ENCODE measurements at regions of chr2 and their contacts with region 1.

Region 1: DNA sequence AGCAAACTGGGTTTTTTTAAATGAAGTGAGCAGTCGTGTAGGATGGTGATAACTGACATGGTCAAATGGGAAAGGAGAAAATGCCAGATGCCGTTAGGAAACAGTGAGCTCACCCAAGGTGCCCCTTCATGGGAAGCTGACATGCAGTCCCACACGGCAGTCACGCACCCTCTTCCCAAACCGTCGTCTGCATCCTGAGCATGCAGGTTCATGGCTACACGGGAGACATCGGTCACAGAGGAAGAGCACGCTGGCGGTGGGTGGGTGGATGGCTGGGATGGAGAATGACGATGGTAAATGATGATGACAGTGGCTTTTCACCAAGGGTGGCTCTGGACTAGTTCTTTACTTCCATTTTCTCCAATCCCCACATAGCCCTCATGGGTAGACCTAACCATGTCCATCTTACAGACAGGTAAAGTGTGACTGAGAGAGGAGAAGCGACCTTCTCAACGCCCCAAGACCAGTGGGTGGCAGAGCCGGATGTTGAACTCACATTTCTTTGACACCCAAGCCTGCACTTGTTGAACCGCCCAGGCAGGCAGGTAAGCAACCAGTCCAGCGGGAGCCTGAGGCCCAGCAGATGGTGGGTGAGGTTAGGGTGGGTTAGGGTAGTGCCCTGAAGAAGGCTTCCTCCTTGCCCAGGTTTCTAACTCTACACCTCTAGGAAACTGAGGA is 44.5 kb downstream of the TNS1 start:
- DNase-seq: peak; percentile 42

Region 2: GRCh38 chr2:217932799-217933616 is 25.3 kb before region 1 on chr2:
- intact Hi-C with region 1: loop called in 1 of 2 experiments (anchors 1 kb)
- DNase-seq: no peak